ENCODE measurements at regions of chr2 and their contacts with region 1.

Region 1: GRCh38 chr2:74458132-74458925 is at the start of gene WBP1:
- DNase-seq: peak; percentile 99
- ATAC-seq: peak; percentile 88
- H3K4me3 Mint-ChIP-seq: peak within 1 kb of the TSS; percentile 90
- H3K27ac Mint-ChIP-seq: peak within 1 kb of the TSS; percentile 99
- H3K4me1 Mint-ChIP-seq: peaks cover 37% of the 10 kb centered on the region
- H3K27me3 Mint-ChIP-seq: no peaks in the 10 kb centered on the region
- total RNA-seq, gene WBP1: 24.9 to 30.2 TPM

Region 2: GRCh38 chr2:73233154-73233931 is 1225.0 kb before region 1 on chr2 and contains the start of gene PRADC1:
- CTCF ChIA-PET with region 1: no interaction called
- POLR2A ChIA-PET with region 1: no interaction called
- intact Hi-C with region 1: loop called in 1 of 2 experiments (anchors 2 kb)
- DNase-seq: peak; percentile 96
- ATAC-seq: peak; percentile 89
- H3K4me3 Mint-ChIP-seq: peak within 1 kb of the TSS; percentile 92
- H3K27ac Mint-ChIP-seq: peak within 1 kb of the TSS; percentile 98
- H3K4me1 Mint-ChIP-seq: peaks cover 32% of the 10 kb centered on the region
- H3K27me3 Mint-ChIP-seq: no peaks in the 10 kb centered on the region
- total RNA-seq, gene PRADC1: 11.8 to 12.1 TPM

Region 3: DNA sequence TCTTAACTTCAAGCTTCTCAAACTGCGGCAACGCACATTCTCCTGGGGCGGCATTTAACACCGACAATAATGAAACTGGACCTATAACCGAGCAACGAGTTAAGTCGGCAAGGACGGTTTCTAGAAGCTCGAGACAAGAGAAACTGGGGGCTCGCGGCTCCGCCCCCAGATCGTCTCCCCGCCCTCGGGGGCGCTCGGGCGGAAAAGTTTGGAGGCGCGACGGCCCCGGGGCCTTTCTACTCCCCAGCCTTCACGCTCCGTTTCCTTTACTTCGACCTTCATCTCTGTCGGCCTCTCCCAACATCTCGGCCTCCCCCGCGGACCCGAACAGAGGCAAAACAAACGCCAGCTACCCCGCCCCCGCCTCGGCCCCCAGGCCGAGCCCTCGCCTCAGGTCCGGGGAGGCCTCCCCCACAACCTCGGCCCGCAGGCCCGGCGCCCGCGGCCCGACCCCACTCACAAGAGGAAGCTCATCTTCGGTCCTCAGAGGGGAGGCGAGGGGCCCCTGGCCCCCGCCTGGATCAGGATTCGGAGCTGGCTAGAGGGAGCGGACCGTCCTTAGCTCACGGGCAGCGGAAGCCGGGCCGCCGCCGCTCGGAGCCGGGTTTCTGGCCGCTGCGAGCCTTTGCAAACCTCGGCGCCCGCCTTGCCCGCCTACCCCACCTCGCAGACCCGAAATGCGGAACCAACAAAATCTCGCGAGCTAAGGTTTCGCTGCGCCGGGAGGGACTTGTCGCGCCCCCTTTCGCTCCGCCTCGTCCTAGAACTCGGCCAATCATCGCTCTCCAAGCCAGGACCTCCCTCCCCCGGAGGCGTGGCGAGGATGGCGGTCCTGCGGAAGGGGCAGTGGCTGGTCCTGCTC is 279.9 kb before region 1 on chr2 and contains the start of gene MOB1A:
- CTCF ChIA-PET with region 1: no interaction called
- POLR2A ChIA-PET with region 1: interaction called, 4 read pairs
- intact Hi-C with region 1: loop called in 1 of 2 experiments (anchors 1 kb)
- DNase-seq: peak; percentile 99
- ATAC-seq: peak; percentile 95
- H3K4me3 Mint-ChIP-seq: peak within 1 kb of the TSS; percentile 82
- H3K27ac Mint-ChIP-seq: peak within 1 kb of the TSS; percentile 87
- H3K4me1 Mint-ChIP-seq: peaks cover 42% of the 10 kb centered on the region
- H3K27me3 Mint-ChIP-seq: no peaks in the 10 kb centered on the region
- total RNA-seq, gene MOB1A: 96.6 to 149 TPM

Region 4: DNA sequence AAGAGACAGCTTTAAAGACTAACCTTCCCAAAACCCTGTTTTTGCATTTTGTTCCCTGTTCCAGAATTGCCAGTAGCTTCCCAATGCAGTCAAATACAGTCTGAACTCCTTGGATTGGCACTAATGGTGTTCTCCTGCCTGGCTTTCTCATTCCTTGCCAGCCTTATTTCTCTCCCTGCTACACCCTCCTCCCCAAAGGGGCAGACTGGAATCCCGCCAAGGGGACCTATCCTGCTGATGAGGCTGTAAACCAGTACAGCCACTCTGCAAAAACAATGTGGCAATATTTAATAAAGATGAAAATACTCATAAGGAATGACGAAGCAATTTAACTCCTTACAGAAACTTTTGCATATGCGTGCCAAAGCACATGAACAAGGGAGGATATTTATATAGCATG is 110.6 kb before region 1 on chr2:
- CTCF ChIA-PET with region 1: no interaction called
- POLR2A ChIA-PET with region 1: no interaction called
- intact Hi-C with region 1: no loop called
- DNase-seq: no peak
- ATAC-seq: no peak
- H3K4me3 Mint-ChIP-seq: no peak overlapping the region
- H3K27ac Mint-ChIP-seq: no peak overlapping the region
- H3K4me1 Mint-ChIP-seq: no peaks in the 10 kb centered on the region
- H3K27me3 Mint-ChIP-seq: no peaks in the 10 kb centered on the region

Region 5: DNA sequence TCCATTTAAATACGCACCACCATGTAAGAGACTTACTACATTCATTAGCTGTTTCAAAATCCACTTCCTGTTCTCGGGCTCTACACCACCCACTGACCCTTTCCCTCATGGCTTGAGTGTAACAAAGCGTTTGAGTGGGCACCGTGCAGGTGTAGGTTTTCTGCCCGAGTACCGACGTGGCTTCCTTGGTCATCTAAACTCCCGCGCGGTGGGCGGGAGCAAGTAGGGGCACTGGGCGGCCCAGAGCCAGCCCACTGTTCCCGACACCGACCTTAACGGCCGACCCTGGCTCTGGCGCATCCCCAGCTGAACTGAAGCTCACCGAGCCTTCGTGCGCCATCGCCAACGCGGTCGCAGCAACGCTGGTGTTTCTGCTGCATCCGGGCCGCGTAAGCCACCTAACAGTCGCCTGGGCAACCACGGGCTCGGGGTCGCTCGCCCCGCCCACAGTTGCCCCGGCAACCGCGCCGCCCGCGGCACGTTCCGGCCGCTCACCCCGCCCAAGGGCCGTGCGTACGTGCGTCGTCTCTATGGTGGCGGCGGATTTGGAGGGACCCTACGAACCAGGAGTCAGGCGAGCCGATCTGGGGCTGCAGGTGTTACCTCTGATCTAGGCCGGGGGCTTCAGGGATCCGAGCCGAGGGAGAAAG is 37.0 kb before region 1 on chr2 and contains the starts of genes C2orf81 and WDR54:
- CTCF ChIA-PET with region 1: interaction called, 4 read pairs
- POLR2A ChIA-PET with region 1: no interaction called
- intact Hi-C with region 1: loop called (anchors 1 kb)
- DNase-seq: peak; percentile 97
- ATAC-seq: peak; percentile 92
- H3K4me3 Mint-ChIP-seq: peak within 1 kb of the TSS; percentile 91
- H3K27ac Mint-ChIP-seq: peak within 1 kb of the TSS; percentile 98
- H3K4me1 Mint-ChIP-seq: peaks cover 34% of the 10 kb centered on the region
- H3K27me3 Mint-ChIP-seq: no peaks in the 10 kb centered on the region
- total RNA-seq, gene C2orf81: 4.5 to 4.9 TPM
- total RNA-seq, gene WDR54: 103 to 119 TPM

Region 6: DNA sequence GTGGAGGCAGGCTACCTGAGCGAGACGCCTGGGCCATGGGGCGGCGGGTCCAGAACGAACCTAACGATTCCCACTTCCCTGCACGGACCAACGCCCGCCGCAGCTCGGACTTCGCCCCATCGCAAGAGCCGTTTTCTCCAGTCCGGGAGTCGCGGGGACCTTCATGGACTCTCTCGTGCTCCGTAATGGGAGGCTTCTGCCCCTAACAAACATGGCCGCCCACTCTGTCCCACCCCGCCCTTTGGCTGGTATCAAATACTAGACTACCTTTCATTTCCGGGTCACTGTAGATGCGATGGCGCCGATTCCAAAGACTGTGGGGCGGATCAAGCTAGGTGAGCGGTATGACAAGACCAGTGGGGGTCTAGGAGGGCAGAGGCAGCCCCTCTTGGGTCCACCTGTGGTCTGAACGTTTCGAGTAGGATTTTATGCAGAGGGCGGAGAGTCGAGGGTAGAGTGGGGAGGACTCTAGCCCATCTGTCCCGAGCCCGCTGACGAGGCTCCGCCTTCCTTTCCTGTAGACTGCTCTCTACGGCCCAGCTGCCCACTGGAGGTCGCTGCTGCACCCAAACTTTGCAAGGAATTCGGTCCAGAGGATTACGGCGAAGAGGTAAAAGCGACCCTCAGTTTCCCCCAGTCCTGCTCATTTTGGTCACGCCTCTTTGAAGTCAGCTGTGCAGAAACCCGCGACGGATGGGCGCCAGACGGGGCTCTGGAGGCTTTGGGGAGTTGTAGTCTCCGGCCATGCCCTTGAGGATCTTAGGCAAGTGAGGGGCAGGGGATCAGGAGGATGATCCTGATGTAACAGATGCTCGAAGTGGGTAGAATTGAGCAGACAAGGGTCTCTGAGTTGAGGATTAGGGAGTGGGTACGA is 24.7 kb after region 1 on chr2 and contains the starts of genes CCDC142 and TTC31:
- CTCF ChIA-PET with region 1: interaction called, 62 read pairs
- POLR2A ChIA-PET with region 1: interaction called, 18 read pairs
- intact Hi-C with region 1: loop called (anchors 1 kb)
- DNase-seq: peak; percentile 96
- ATAC-seq: peak; percentile 95
- H3K4me3 Mint-ChIP-seq: peak within 1 kb of the TSS; percentile 90
- H3K27ac Mint-ChIP-seq: peak within 1 kb of the TSS; percentile 99
- H3K4me1 Mint-ChIP-seq: peaks cover 31% of the 10 kb centered on the region
- H3K27me3 Mint-ChIP-seq: no peaks in the 10 kb centered on the region
- total RNA-seq, gene CCDC142: 9.7 to 13.2 TPM
- total RNA-seq, gene TTC31: 24.0 to 24.6 TPM

Region 7: DNA sequence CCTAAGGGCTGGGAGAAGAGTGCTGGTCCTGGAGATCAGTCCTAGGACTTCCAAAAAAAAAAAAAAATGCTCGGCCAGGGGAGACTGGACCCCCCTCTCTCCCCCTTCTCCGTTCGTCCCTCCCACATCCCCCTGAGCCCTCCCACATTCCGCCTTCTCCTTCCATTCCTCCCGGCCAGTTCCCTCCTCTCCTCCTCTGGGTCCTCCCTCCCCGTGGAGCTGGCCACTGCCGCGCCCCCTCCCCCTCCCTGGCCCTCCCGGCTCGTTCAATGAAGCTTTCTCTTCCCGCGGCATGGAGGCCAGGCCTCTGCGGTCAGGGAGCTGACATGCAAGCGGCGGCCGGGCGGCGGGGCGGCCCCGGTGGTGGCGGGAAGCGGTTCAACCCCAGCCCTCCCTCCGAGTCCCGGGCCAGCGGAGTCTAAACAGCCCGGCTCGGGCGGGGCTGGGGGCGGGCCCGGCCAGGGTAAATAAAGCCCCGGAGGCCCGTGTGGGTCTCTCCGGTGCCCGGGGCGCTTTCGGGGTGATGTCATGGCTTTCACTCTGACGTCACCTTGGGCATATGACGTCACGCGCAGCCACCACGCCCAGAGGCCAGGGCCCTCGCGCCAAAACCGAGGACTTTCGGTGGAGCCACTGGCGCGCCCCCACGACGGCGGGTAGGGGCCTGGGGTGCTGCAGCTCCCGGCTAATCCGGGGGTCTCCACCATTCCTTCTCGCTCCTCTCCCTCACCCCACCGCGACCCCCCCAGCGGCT is 95.7 kb after region 1 on chr2 and contains the start of gene LOXL3:
- CTCF ChIA-PET with region 1: interaction called, 3 read pairs
- POLR2A ChIA-PET with region 1: no interaction called
- intact Hi-C with region 1: loop called in 1 of 2 experiments (anchors 1 kb)
- DNase-seq: peak; percentile 89
- ATAC-seq: peak; percentile 65
- H3K4me3 Mint-ChIP-seq: peak within 1 kb of the TSS; percentile 91
- H3K27ac Mint-ChIP-seq: peak within 1 kb of the TSS; percentile 91
- H3K4me1 Mint-ChIP-seq: peaks cover 9% of the 10 kb centered on the region
- H3K27me3 Mint-ChIP-seq: peaks cover 17% of the 10 kb centered on the region
- total RNA-seq, gene LOXL3: 0.86 to 0.96 TPM

Region 8: GRCh38 chr2:74833418-74834233 is 375.3 kb after region 1 on chr2 and contains the start of gene HK2:
- CTCF ChIA-PET with region 1: no interaction called
- POLR2A ChIA-PET with region 1: no interaction called
- intact Hi-C with region 1: loop called in 1 of 2 experiments (anchors 5 kb)
- DNase-seq: peak; percentile 93
- ATAC-seq: peak; percentile 86
- H3K4me3 Mint-ChIP-seq: peak within 1 kb of the TSS; percentile 89
- H3K27ac Mint-ChIP-seq: peak within 1 kb of the TSS; percentile 95
- H3K4me1 Mint-ChIP-seq: peaks cover 48% of the 10 kb centered on the region
- H3K27me3 Mint-ChIP-seq: no peaks in the 10 kb centered on the region
- total RNA-seq, gene HK2: 84.4 to 105 TPM

Region 9: GRCh38 chr2:75047992-75048625 is 589.8 kb after region 1 on chr2:
- CTCF ChIA-PET with region 1: no interaction called
- POLR2A ChIA-PET with region 1: no interaction called
- intact Hi-C with region 1: no loop called
- DNase-seq: no peak
- ATAC-seq: no peak
- H3K4me3 Mint-ChIP-seq: no peak overlapping the region
- H3K27ac Mint-ChIP-seq: no peak overlapping the region
- H3K4me1 Mint-ChIP-seq: no peaks in the 10 kb centered on the region
- H3K27me3 Mint-ChIP-seq: no peaks in the 10 kb centered on the region

Measured in activated CD4-positive, alpha-beta T cell treated with anti-CD3 and anti-CD28 coated beads for 36 hours (primary cell).